Ovary (tissue), 10 donors: ENCODE measurements at regions of chr16 and their contacts with region 1.

Region 1: DNA sequence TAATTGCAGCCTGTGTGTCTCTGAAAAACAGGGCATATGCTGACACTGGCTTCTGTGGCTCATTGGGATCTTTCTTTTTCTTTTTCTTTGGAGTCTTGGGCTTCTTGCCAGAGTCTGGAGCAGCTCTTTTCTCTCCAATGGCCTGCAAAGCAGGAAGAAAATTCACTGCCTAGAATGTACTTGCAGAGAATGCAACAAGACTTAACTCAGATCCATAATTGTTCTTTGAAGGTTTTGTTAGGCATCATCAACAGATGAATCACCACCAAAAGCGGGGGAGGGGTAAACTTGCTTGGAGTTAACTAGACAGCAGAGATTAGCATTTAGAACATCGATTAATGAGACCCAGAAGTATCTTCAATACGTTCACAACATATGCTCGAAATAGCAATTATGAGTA is 100.9 kb downstream of the TOX3 start:
- DNase-seq: no peak
- H3K4me3 ChIP-seq: no peak overlapping the region
- H3K27ac ChIP-seq: no peak overlapping the region
- H3K4me1 ChIP-seq: no peaks in the 10 kb centered on the region
- H3K27me3 ChIP-seq: no peaks in the 10 kb centered on the region
- CTCF ChIP-seq: no peak
- EP300 ChIP-seq: no peak
- POLR2A ChIP-seq: no peak

Region 2: DNA sequence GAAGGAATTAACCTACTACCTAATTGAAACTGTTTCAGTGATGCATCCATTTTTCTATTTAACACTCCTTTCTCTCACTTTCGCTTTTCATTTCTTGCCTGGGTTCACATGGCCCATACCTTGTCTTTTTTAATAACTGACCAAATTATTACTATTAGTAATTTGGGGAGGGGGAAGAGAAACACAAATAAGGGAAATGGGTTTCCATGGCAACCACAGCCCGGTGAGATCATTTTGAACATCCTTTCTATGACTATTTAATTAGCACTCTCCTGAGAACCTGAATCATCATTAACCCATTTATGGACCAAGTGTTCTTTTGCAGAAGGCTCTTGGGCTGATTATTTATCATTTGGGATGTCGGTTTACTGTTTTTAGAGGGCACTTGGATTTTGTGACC is 666.8 kb before region 1 on chr16:
- intact Hi-C with region 1: loop called in 1 of 4 experiments (anchors 10 kb)
- DNase-seq: no peak
- H3K4me3 ChIP-seq: no peak overlapping the region
- H3K27ac ChIP-seq: no peak overlapping the region
- H3K4me1 ChIP-seq: no peaks in the 10 kb centered on the region
- H3K27me3 ChIP-seq: no peaks in the 10 kb centered on the region
- CTCF ChIP-seq: no peak
- EP300 ChIP-seq: no peak
- POLR2A ChIP-seq: no peak